ENCODE measurements at regions of chr19 and their contacts with region 1.

Region 1: GRCh38 chr19:32345261-32346207 is at the start of gene ZNF507:
- DNase-seq: peak; percentile 82 to 87
- ATAC-seq: peak; percentile 94 to 99 (median 97)
- H3K4me3 ChIP-seq: peak within 1 kb of the TSS; percentile 77 to 98 (median 90)
- H3K27ac ChIP-seq: peak within 1 kb of the TSS; percentile 16 to 91 (median 85)
- H3K4me1 ChIP-seq: peaks cover 0 to 42% (median 35%) of the 10 kb centered on the region in 9 donors
- H3K27me3 ChIP-seq: peaks cover 0 to 98% (median 0%) of the 10 kb centered on the region in 7 donors
- CTCF ChIP-seq: peak in 2 of 9 donors; percentile 21 to 28
- total RNA-seq, gene ZNF507: 13.3 to 26.6 (median 17.7) TPM

Region 2: GRCh38 chr19:32405431-32406161 is 60.1 kb after region 1 on chr19 and contains the start of gene DPY19L3:
- intact Hi-C with region 1: loop called in 5 of 10 experiments (anchors 5 to 10 kb)
- DNase-seq: peak; percentile 94 to 95
- ATAC-seq: peak; percentile 98 to 100 (median 99)
- H3K4me3 ChIP-seq: peak within 1 kb of the TSS; percentile 64 to 98 (median 80)
- H3K27ac ChIP-seq: peak within 1 kb of the TSS; percentile 86 to 99 (median 96)
- H3K4me1 ChIP-seq: peaks cover 0 to 25% (median 15%) of the 10 kb centered on the region in 9 donors
- H3K27me3 ChIP-seq: peaks cover 0 to 14% (median 0%) of the 10 kb centered on the region in 7 donors
- CTCF ChIP-seq: no peak
- total RNA-seq, gene DPY19L3: 3.2 to 11.8 (median 4.7) TPM

Region 3: DNA sequence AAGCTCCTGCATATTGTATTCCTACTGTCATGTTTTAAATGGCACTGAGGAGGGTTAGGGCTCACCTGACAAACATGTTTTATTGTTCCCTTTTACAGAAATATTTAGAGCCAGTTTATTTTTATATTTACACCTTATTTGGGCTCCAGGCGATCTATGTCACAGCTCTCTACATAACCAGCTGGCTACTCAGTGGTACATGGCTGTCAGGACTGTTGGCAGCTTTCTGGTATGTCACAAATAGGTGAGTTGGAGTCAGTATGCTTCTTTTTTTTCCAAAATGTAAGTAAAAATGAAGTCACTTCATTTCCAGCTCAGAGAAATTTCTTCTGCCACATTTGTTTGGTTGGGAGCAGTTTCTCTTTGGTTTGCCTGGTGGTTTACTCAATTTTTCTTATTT is 91.6 kb after region 1 on chr19:
- intact Hi-C with region 1: no loop called
- DNase-seq: no peak
- ATAC-seq: no peak
- H3K4me3 ChIP-seq: no peak overlapping the region
- H3K27ac ChIP-seq: no peak overlapping the region
- H3K4me1 ChIP-seq: no peaks in the 10 kb centered on the region
- H3K27me3 ChIP-seq: no peaks in the 10 kb centered on the region
- CTCF ChIP-seq: no peak

Region 4: DNA sequence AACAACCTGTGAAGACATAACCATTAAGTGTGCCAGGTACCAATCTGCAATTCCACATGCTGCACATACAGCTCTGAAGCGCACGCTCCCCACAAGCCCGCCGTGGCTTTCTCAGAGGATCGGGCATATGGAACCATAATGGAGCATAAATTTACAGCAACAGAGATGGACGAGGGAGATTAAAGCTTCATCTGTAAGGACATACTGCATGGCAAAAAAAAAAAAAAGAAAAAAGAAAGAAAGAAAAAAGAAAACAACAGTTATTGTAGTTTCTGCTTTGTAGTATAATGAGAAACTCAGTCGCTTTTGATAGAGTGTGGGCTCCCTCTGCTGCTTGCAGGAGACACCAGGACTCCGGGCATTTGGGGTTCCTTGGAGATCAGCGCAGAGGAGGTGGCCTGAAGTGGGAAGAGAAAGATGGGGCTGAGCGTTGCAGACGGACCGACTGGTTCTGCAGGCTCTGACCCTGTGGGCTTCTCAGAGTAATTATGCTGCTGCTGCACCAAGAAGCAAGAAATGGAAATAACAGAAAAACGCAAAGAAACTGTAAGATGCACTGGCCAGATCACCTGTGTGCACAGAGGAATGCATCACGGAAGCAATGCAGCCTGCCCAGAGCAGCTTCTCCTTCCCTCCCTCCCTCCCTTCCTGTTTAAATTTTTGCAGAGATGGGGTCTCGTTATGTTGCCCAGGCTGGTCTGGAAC is 224.7 kb after region 1 on chr19:
- intact Hi-C with region 1: loop called in 2 of 10 experiments (anchors 1 to 10 kb)
- DNase-seq: peak in 1 of 2 donors; percentile 34
- ATAC-seq: peak in 7 of 8 donors; percentile 51 to 84 (median 76)
- H3K4me3 ChIP-seq: no peak overlapping the region
- H3K27ac ChIP-seq: no peak overlapping the region
- H3K4me1 ChIP-seq: peaks cover 0 to 3% (median 0%) of the 10 kb centered on the region in 9 donors
- H3K27me3 ChIP-seq: peaks cover 0 to 40% (median 32%) of the 10 kb centered on the region in 7 donors
- CTCF ChIP-seq: peak; percentile 14 to 76 (median 64)

Region 5: GRCh38 chr19:32580901-32581703 is 235.6 kb after region 1 on chr19 and contains the start of gene PDCD5:
- intact Hi-C with region 1: loop called in 5 of 10 experiments (anchors 5 to 10 kb)
- DNase-seq: peak; percentile 96 to 98
- ATAC-seq: peak; percentile 97 to 99 (median 98)
- H3K4me3 ChIP-seq: peak within 1 kb of the TSS; percentile 70 to 97 (median 88)
- H3K27ac ChIP-seq: peak within 1 kb of the TSS; percentile 47 to 96 (median 90)
- H3K4me1 ChIP-seq: peaks cover 0 to 25% (median 11%) of the 10 kb centered on the region in 9 donors
- H3K27me3 ChIP-seq: no peaks in the 10 kb centered on the region
- CTCF ChIP-seq: no peak
- total RNA-seq, gene PDCD5: 84.3 to 172 (median 103) TPM